Colonic mucosa (tissue), 4 donors: ENCODE measurements at regions of chr22 and their contacts with region 1.

Region 1: DNA sequence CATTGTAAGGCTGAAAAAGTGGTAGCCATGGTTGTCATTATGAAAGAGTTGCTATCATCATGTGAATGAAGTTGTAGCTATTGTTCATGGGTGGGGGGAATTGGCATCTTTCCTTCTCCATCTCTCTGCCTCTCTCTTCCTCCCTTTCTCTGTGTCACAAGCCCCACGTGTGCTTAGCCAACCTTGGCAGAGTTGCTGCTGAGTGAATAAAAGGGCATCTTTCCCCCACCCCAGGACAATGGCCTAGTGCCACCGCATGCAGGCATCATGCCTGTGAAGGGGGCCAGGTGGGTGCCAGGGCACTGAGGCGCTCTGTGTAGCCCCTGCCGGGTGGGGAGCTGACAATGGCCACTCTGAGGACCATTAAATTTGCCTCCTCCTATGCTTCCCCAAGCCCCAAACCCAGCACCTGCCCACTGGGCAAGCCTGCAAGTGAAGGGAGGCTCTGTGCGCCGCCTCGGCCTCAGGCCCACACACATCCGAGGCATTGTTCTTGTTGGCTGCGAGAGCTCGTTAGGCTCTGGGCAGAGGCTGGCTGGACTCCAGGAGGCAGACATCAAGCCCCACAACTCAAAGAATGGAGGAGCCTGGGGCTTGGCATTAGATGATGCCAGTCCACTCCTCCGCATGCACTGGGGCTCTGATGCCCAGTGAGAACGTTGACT is 103.9 kb downstream of the SEZ6L start:
- DNase-seq: no peak
- H3K4me3 ChIP-seq: no peak overlapping the region
- H3K27ac ChIP-seq: no peak overlapping the region
- H3K4me1 ChIP-seq: no peaks in the 10 kb centered on the region
- H3K27me3 ChIP-seq: no peaks in the 10 kb centered on the region
- CTCF ChIP-seq: no peak

Region 2: DNA sequence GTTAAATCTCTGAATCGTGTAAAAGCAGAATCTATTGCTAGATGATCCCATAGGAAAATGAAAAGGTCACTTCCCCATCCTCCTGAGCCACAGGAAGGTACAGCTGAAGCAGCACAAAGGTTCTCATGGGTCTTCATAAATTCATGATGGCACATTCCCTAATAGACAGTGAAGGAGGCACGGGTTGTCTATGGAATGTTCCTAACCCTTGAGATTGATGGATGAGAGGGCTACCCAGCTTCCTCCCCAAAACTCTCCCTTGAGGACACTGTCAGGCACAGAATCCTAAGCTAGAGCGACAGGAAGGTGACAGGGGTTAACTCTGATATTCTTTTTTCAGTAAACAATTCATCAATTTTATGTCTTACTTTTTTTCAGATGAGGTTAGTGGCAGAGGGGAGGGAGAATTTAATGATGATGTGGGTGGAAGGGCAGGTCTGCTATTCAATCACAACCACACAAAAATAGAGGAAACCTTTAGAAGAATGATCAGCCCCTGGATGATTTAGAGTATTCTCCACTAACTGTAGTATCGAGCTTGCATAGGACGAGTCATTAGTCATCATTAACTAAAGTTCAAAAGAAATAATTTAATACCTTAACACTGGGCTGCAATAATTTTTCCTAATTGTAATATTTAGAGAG is 70.7 kb before region 1 on chr22:
- intact Hi-C with region 1: no loop called
- DNase-seq: no peak
- H3K4me3 ChIP-seq: no peak overlapping the region
- H3K27ac ChIP-seq: no peak overlapping the region
- H3K4me1 ChIP-seq: no peaks in the 10 kb centered on the region
- H3K27me3 ChIP-seq: no peaks in the 10 kb centered on the region
- CTCF ChIP-seq: no peak

Region 3: DNA sequence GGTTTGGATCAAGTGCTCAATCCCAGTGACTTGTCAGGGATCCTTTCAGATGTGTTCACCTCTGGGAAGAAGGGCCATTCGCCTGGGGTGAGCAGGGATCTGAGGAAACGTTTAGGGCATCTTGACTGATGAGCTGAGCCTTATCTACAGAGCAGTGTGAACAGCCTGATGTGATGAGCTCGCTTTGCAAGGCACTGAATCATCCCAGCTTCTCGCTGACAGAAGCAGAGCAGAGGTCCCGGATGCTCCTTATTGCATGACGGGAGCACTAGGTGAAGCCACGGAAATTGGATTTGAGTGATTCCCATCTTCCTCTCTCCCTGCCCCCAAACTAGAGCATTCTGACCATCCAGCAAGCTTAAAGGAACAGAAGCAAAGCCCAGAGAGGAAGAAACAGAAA is 57.4 kb before region 1 on chr22:
- intact Hi-C with region 1: loop called (anchors 10 kb)
- DNase-seq: no peak
- H3K4me3 ChIP-seq: no peak overlapping the region
- H3K27ac ChIP-seq: no peak overlapping the region
- H3K4me1 ChIP-seq: no peaks in the 10 kb centered on the region
- H3K27me3 ChIP-seq: no peaks in the 10 kb centered on the region
- CTCF ChIP-seq: no peak